Activated T-helper 2 cell treated with anti-CD3 and anti-CD28 coated beads, Interferon-gamma antibody, Interleukin-2, Interleukin-4, amounts not matched to agents 10 μg/mL and 5 μg/mL and 100 μg/mL, durations not matched to agents 14 hours and 24 hours and 36 hours (primary cell): ENCODE measurements at regions of chr9 and their contacts with region 1.

Region 1: DNA sequence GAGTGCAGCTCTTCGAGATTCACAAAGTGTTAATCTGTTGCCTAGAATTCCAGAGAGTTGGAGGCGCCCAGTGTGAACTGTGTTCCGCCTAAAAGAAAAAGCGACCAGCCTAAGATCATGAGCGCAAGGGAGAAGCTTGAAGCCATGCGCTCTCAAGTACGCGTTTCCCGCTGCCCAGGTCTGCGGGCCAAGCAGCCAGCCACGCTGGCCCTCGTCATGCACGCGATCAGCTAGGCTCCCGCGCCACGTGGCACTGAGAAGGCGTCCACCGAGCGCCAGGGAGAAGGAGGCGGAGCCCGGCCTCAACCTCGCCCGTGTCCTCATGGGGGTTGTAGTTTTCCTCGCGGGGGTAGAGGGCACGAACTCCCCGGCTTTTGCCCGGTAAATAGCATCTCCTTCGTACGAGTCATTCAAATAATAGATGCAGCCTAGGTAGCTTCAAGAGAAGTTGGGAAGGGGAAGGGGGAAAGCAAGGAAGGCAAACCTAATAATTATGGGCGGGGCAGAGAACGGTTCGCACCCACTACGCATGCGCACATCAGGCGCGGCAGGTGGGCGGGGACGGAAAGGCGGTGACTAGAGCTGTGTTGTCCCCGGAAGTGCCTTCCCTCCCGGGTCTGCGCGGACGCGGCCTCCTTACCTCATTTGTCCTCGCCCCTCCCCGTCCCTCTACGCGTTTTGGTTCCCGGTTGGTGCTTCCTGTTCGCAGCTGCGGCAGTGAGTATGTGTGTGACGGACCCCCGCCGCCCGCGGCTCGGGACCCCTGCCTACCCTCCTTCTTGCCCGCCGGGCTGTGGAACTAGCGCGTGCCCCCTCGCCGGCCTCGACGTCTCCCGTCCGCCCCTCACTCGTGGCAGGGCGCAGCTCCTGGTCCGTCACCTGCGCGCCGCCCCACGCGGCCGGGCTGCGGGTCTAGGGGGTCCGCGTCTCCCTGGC is at the start of gene ZCCHC7:
- DNase-seq: peak; percentile 95
- H3K4me3 Mint-ChIP-seq: peak within 1 kb of the TSS; percentile 98
- H3K27ac Mint-ChIP-seq: peak within 1 kb of the TSS; percentile 99
- H3K4me1 Mint-ChIP-seq: peaks cover 23% of the 10 kb centered on the region
- H3K27me3 Mint-ChIP-seq: no peaks in the 10 kb centered on the region
- total RNA-seq, gene ZCCHC7: 22.1 and 26.1 TPM in 2 replicates

Region 2: DNA sequence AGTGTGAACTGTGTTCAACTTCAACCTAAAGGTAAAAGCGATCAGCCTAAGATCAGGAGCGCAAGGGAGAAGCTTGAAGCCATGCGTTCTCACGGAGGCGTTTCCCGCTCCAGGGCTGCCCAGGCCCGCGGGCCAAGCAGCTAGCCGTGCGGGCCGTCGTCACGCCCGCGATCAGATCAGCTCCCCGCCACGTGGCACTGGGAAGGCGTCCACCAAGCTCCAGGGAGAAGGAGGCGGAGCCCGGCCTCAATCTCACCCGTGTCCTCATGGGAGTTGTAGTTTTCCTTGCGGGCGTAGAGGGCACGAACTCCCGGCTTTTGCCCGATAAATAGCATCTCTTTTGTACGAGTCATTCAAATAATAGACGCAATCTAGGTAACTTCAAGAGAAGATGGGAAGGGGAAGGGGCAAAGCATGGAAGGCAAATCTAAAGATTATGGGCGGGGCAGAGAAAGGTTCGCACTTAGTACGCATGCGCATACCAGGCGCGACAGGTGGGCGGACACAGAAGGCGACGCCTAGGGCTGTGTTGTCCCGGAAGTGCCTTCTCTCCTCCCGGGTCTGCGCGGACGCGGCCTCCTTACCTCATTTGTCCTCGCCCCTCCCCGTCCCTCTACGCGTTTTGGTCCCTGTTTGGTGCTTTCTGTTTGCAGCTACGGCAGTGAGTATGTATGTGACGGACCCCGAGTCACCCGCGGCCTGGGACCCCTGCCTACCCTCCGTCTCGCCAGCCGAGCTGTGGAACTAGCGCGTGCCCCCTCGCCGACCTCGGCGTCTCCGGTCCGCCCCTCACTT is 40.6 kb before region 1 on chr9:
- intact Hi-C with region 1: loop called (anchors 1 kb)
- DNase-seq: peak; percentile 91
- H3K4me3 Mint-ChIP-seq: peak overlapping the region; percentile 96
- H3K27ac Mint-ChIP-seq: peak overlapping the region; percentile 96
- H3K4me1 Mint-ChIP-seq: peaks cover 33% of the 10 kb centered on the region
- H3K27me3 Mint-ChIP-seq: peaks cover 3% of the 10 kb centered on the region

Region 3: GRCh38 chr9:37174247-37174646 is 54.1 kb after region 1 on chr9:
- intact Hi-C with region 1: no loop called
- DNase-seq: no peak
- H3K4me3 Mint-ChIP-seq: no peak overlapping the region
- H3K27ac Mint-ChIP-seq: no peak overlapping the region
- H3K4me1 Mint-ChIP-seq: peaks cover 10% of the 10 kb centered on the region
- H3K27me3 Mint-ChIP-seq: no peaks in the 10 kb centered on the region

Region 4: GRCh38 chr9:37184905-37185867 is 65.0 kb after region 1 on chr9:
- intact Hi-C with region 1: no loop called
- DNase-seq: no peak
- H3K4me3 Mint-ChIP-seq: no peak overlapping the region
- H3K27ac Mint-ChIP-seq: no peak overlapping the region
- H3K4me1 Mint-ChIP-seq: peaks cover 31% of the 10 kb centered on the region
- H3K27me3 Mint-ChIP-seq: no peaks in the 10 kb centered on the region

Region 5: DNA sequence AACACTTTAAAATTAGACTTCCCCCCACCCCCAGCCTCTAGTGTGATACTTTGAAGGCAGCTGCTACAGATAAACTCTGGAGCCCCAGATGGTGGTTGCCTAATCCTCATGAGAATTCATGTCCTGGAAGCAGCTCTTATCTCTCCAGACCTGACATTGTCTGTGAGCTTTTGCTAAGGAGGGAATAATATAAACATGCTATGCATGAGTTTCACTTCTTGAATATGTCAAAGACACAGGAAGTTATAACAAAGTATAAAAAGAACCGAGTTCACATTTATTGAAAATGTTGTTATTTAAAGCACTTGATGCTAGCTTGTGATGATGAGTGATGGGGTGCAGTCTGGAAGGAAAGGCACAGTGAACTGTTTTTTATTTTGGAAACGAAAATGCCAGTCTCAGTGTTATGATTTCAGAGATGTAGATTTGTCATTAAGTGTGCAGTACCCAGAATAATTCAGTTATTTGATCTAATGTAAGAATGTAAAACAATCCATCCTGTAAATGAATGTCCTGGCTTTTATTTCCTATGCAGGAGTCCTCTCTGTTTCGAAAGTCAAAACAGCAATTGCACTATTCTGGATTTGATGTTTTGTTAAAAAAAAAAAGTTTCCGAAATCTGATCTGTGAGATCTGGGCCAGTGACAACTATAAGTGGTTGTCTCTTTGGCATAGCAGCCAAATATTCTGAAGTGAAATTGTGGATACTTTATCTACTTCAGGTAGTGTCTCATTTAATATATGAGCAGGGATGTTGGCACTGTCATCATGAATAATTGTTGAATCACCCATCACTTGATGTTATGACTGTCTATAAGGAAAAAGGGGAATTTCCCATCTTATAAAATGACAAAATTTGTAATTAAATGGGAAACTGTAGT is 77.2 kb after region 1 on chr9:
- intact Hi-C with region 1: loop called (anchors 5 kb)
- DNase-seq: no peak
- H3K4me3 Mint-ChIP-seq: peak overlapping the region; percentile 35
- H3K27ac Mint-ChIP-seq: peak overlapping the region; percentile 83
- H3K4me1 Mint-ChIP-seq: peaks cover 48% of the 10 kb centered on the region
- H3K27me3 Mint-ChIP-seq: no peaks in the 10 kb centered on the region

Region 6: GRCh38 chr9:37302277-37302676 is 182.1 kb after region 1 on chr9:
- intact Hi-C with region 1: loop called (anchors 5 kb)
- DNase-seq: peak; percentile 44
- H3K4me3 Mint-ChIP-seq: peak overlapping the region; percentile 52
- H3K27ac Mint-ChIP-seq: peak overlapping the region; percentile 86
- H3K4me1 Mint-ChIP-seq: peaks cover 49% of the 10 kb centered on the region
- H3K27me3 Mint-ChIP-seq: no peaks in the 10 kb centered on the region